Posterior vena cava (tissue), 2 donors: ENCODE measurements at regions of chr2 and their contacts with region 1.

Region 1: GRCh38 chr2:8004250-8004681 is 677.6 kb upstream of the ID2 start:
- DNase-seq: no peak

Region 2: DNA sequence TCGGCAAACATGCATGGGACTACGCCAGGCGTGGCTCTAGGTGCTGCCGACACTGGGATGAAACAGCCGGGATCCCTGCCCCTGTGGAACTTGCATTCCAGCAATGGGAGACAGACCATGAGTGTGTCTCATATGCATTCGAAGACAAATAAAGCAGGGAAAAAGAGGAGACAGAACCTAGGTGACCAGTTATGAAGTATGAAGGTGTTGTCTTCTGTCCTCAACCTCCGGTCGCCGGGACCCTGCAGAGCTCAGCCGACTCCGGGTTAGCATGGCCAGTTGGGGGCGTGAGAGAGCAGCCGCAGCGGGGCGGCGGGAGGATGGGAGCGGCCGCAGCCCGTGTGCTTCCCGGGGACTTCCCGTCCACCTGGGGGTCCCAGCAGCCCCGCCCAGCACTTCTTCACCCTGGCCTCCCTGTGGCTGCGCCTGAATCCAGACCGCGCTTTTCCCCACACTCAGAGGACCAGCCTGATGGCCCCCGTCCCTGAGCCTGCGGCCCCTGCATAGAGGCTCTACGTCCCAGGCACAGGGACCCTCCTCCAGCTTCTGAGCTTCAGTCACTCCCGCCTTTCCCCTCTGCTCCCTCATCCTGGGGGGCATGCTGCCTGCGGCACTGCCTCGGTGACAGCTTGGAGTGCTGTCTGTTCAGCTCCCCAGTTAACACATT is 689.0 kb after region 1 on chr2:
- intact Hi-C with region 1: loop called in 1 of 2 experiments (anchors 2 kb)
- DNase-seq: no peak

Region 3: DNA sequence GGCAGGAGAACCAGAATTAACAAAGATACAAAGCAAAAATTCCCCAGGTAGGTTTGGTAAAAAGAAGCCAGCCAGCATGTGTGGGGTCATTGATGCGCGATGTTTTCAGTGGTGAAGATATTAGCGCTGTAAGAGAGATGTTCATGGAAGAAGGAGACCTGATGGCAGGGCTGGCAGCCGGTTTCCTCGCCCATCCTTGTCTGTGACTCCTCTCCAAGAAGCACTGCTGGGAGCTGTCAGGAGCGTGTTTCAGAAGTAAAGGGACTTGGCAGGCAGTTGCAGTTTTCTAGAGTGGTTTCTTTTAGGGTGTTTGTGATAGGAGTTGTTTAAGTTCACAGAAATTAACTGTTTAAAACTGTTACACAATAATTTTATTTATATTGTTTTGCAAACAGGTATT is 1863.6 kb after region 1 on chr2:
- intact Hi-C with region 1: loop called in 1 of 2 experiments (anchors 10 kb)
- DNase-seq: no peak